ENCODE measurements at regions of chr2 and their contacts with region 1.

Region 1: GRCh38 chr2:58054264-58054663 is 7.7 kb downstream of the VRK2 start:
- DNase-seq: no peak
- H3K4me3 Mint-ChIP-seq: no peak overlapping the region
- H3K27ac Mint-ChIP-seq: no peak overlapping the region
- H3K4me1 Mint-ChIP-seq: no peaks in the 10 kb centered on the region
- H3K27me3 Mint-ChIP-seq: no peaks in the 10 kb centered on the region
- CTCF ChIP-seq: no peak

Region 2: DNA sequence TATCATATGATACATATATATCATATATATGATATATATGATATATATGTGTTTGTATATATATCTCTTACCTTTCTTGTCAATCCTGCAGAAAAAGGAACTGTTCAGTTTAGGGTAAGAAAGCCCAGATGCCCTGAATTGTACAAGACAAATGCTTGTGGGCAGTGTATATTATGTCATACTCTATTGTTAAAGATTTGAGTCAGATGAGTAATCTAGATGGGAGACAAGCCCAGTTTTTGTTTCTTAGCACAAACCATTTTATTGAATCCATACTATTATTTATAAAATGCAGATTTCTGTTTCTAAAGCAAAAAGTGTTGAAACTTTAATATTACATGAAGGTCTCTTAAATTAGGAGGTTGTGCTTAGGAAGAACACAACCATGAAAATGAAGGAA is 83.0 kb after region 1 on chr2:
- CTCF ChIA-PET with region 1: no interaction called
- intact Hi-C with region 1: loop called (anchors 5 kb)
- DNase-seq: no peak
- H3K4me3 Mint-ChIP-seq: no peak overlapping the region
- H3K27ac Mint-ChIP-seq: no peak overlapping the region
- H3K4me1 Mint-ChIP-seq: no peaks in the 10 kb centered on the region
- H3K27me3 Mint-ChIP-seq: no peaks in the 10 kb centered on the region
- CTCF ChIP-seq: no peak